Head of caudate nucleus (tissue), 42 donors: ENCODE measurements at regions of chr1 and their contacts with region 1.

Region 1: GRCh38 chr1:119613769-119614720 is 34.0 kb downstream of the ZNF697 start:
- DNase-seq: peak; percentile 73 to 96 (median 89)

Region 2: GRCh38 chr1:119420644-119421043 is 193.4 kb before region 1 on chr1:
- intact Hi-C with region 1: no loop called
- DNase-seq: no peak

Region 3: GRCh38 chr1:119662034-119662437 is 48.0 kb after region 1 on chr1:
- intact Hi-C with region 1: loop called (anchors 5 kb)
- DNase-seq: no peak

Region 4: GRCh38 chr1:119675349-119676345 is 61.6 kb after region 1 on chr1:
- intact Hi-C with region 1: loop called (anchors 2 kb)
- DNase-seq: peak; percentile 42 to 96 (median 83)